ENCODE measurements at regions of chr7 and their contacts with region 1.

Region 1: GRCh38 chr7:40382145-40382544 is 247.3 kb downstream of the SUGCT start:
- DNase-seq: no peak
- ATAC-seq: no peak
- H3K4me3 ChIP-seq: no peak overlapping the region
- H3K27ac ChIP-seq: no peak overlapping the region
- H3K4me1 ChIP-seq: no peaks in the 10 kb centered on the region
- H3K27me3 ChIP-seq: no peaks in the 10 kb centered on the region
- CTCF ChIP-seq: no peak
- POLR2A ChIP-seq: no peak

Region 2: DNA sequence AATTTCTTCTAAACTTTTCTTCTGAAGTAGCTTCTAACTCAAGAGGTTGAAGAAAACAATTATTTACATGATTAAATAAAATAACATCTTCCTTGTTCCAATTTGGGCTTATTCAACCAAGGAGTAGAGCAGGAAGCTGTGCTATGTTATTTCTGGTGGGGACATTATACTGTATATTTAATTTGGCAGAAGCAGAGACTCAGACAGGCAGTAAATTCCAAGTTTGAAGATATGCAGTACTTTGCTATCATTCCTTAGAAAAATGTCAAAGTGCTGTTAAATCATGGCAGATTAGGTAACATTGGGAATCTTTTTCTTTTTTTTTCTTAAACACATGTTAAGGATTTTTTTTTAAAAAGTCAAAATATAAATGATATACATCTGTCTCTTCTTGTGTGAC is 57.3 kb before region 1 on chr7:
- intact Hi-C with region 1: no loop called
- DNase-seq: no peak
- ATAC-seq: no peak
- H3K4me3 ChIP-seq: no peak overlapping the region
- H3K27ac ChIP-seq: no peak overlapping the region
- H3K4me1 ChIP-seq: peaks cover 0 to 2% (median 0%) of the 10 kb centered on the region in 12 donors
- H3K27me3 ChIP-seq: no peaks in the 10 kb centered on the region
- CTCF ChIP-seq: no peak
- POLR2A ChIP-seq: no peak

Region 3: GRCh38 chr7:40437498-40437897 is 55.4 kb after region 1 on chr7:
- intact Hi-C with region 1: loop called in 1 of 10 experiments (anchors 2 kb)
- DNase-seq: no peak
- ATAC-seq: peak; percentile 42 to 61 (median 44)
- H3K4me3 ChIP-seq: no peak overlapping the region
- H3K27ac ChIP-seq: no peak overlapping the region
- H3K4me1 ChIP-seq: peaks cover 0 to 4% (median 0%) of the 10 kb centered on the region in 12 donors
- H3K27me3 ChIP-seq: no peaks in the 10 kb centered on the region
- CTCF ChIP-seq: no peak
- POLR2A ChIP-seq: no peak

Measured in heart left ventricle (tissue), 16 donors.